ENCODE measurements at regions of chr3 and their contacts with region 1.

Region 1: GRCh38 chr3:58093573-58094195 is 85.5 kb downstream of the FLNB start:
- DNase-seq: no peak
- H3K4me3 ChIP-seq: no peak overlapping the region
- CTCF ChIP-seq: no peak

Region 2: DNA sequence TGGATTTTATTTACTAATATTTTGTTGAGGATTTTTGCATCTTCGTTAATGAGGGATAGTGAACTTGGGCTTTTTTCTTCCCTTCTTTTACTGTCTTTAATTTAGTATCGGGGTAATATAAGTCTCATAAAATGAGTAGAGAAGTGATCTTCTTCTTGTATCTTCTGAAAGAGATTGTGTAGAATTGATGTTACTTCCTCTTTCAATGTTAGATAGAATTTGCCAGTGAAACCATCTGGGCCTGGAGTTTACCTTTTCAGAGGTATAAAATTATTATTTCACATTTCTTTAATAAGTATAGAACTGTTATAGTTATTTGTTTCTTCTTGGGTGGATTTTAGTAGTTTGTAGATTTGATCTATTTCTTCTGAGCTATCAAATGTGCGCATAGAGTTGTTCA is 901.7 kb before region 1 on chr3:
- in situ Hi-C with region 1: no loop called
- DNase-seq: no peak
- H3K4me3 ChIP-seq: no peak overlapping the region
- CTCF ChIP-seq: no peak

Region 3: DNA sequence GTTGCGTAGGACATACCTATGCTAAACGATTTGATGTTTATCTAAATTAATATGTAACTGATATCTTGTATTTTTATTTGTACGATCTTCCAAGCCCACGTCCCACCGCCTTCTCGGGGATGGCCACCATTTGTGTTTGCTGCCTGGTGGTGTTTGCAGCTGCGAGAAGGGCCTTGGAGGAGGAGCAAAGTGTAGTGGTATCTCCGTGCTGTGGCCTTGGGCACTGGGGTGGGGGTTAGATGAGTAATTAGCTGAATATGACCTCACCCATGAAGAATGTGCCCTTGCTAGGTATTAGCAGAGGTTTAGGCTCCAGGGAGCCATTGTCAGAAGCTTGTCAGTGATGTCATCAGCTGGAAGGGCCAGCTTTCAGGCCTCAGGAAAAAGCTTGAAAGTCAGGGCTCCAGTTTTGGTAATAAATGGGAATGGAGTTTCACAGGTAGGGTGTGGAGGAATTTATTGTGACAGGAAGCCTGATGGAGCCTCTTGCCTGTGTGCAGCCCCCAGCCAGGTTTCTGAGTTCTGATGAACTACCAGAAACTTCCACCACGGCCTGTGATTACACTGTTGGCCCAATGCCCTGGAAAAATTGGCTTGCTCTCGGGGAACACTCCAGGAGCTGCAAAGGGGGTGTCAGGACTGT is 44.4 kb before region 1 on chr3:
- in situ Hi-C with region 1: loop called (anchors 5 kb)
- DNase-seq: no peak
- H3K4me3 ChIP-seq: no peak overlapping the region
- CTCF ChIP-seq: no peak

Region 4: GRCh38 chr3:58151637-58152036 is 58.0 kb after region 1 on chr3:
- in situ Hi-C with region 1: loop called (anchors 10 kb)
- DNase-seq: no peak
- H3K4me3 ChIP-seq: no peak overlapping the region
- CTCF ChIP-seq: no peak

Measured in astrocyte of the cerebellum (primary cell).